ENCODE measurements at regions of chr1 and their contacts with region 1.

Region 1: GRCh38 chr1:228515200-228515834 is 28.1 kb downstream of the RNF187 start:
- DNase-seq: peak; percentile 45
- ATAC-seq: no peak
- H3K4me3 Mint-ChIP-seq: no peak overlapping the region
- H3K27ac Mint-ChIP-seq: no peak overlapping the region
- H3K4me1 Mint-ChIP-seq: peaks cover 8% of the 10 kb centered on the region
- H3K27me3 Mint-ChIP-seq: peaks cover 18% of the 10 kb centered on the region

Region 2: DNA sequence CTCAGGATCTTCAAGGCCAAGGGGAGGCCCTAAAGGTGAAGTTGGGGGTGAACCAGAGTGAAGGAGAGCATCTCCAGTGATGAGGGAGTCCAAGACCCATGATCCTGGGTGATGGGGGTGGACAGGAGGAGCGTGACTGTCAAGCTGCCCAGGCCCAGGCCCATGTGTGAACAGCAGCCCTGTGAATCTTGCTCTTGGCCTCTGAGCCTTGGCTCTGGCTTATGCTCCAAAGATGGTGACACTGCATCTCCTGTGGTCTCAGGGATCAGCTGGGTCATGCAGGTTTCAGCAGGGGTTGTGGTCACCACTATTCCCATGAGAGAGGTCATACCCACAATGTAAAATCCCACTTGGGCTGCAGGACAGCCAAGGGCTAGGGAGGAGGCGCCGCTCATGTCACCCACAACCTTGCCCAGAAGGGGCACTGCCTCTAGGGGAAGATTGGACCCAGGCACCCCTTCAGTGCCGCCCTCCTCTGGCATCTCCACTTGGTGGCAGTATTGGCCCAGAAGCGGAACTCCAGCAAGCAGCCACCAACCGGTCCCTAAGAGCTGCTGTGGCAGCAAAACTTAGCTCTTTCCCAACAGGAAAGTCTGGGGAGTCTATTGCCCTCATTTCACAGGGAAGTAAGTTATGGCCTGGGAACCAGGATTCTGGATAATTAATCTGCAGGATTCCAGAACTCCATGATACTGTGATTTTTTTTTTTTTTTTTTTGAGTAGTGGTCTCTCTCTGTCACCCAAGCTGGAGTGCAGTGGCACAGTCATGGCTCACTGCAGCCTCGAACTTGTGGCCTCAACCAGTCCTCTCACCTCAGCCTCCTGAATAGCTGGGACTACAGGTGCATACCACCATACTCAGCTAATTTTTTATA is 516.0 kb before region 1 on chr1:
- CTCF ChIA-PET with region 1: interaction called, 3 read pairs
- POLR2A ChIA-PET with region 1: no interaction called
- intact Hi-C with region 1: loop called in 1 of 2 experiments (anchors 1 kb)
- DNase-seq: peak; percentile 87
- ATAC-seq: peak; percentile 98
- H3K4me3 Mint-ChIP-seq: no peak overlapping the region
- H3K27ac Mint-ChIP-seq: no peak overlapping the region
- H3K4me1 Mint-ChIP-seq: no peaks in the 10 kb centered on the region
- H3K27me3 Mint-ChIP-seq: peaks cover 18% of the 10 kb centered on the region

Region 3: DNA sequence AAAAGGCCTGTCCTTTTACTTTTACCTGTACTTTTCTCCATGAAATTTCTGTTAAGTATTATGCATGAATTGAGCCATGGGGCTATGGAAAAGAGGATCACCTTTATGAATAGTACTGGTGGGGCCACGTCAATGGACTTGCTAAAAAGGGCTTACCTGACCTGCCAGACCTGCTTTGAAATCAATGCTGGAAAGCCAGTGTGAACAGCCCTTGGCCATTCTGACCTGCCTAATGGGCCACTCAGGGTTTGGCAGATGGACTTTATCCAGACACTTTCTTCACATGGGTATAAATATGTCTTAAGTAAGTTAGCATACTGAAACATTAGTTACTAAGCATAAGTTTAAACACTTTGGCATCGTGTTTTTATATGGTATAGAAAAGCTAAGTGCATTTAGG is 383.6 kb before region 1 on chr1:
- CTCF ChIA-PET with region 1: interaction called, 3 read pairs
- POLR2A ChIA-PET with region 1: no interaction called
- intact Hi-C with region 1: loop called (anchors 1 kb)
- DNase-seq: no peak
- ATAC-seq: no peak
- H3K4me3 Mint-ChIP-seq: no peak overlapping the region
- H3K27ac Mint-ChIP-seq: no peak overlapping the region
- H3K4me1 Mint-ChIP-seq: peaks cover 3% of the 10 kb centered on the region
- H3K27me3 Mint-ChIP-seq: peaks cover 5% of the 10 kb centered on the region

Region 4: DNA sequence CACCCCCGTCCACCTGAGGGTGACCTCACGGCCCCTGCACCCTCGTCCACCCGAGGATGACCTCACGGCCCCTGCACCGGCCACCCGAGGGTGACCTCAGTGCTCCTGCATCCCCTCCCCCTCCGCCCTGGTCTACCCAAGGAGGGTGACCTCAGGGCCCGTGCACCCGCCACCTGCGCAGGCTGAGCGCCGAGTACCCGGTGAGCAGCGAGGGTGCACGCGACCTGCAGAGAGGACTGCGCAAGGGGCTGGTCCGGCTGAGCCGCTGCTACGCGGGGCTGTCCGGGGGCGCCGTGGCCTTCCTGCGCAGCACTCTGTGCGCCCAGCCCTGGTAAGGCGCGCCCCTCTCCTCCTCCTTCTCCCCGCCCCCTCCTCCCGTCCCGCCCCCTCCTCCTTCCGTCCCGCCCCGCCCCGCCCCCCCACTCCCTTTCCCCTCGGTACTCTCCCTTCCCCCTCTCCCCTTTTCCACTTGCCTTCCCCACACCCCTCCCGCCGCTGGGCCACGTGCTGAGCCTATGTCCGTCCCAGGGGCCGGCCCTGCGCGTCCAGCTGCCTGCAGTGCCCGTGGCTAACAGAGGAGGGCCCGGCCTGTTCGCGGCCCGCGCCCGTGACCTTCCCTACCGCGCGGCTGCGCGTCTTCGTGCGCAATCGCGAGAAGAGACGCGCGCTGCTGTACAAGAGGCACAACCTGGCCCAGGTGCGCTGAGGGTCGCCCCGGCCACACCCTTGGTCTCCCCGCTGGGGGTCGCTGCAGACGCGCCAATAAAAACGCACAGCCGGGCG is 137.0 kb before region 1 on chr1:
- CTCF ChIA-PET with region 1: no interaction called
- POLR2A ChIA-PET with region 1: no interaction called
- intact Hi-C with region 1: loop called in 1 of 2 experiments (anchors 1 kb)
- DNase-seq: peak; percentile 84
- ATAC-seq: peak; percentile 77
- H3K4me3 Mint-ChIP-seq: peak overlapping the region; percentile 73
- H3K27ac Mint-ChIP-seq: no peak overlapping the region
- H3K4me1 Mint-ChIP-seq: peaks cover 8% of the 10 kb centered on the region
- H3K27me3 Mint-ChIP-seq: peaks cover 10% of the 10 kb centered on the region

Region 5: DNA sequence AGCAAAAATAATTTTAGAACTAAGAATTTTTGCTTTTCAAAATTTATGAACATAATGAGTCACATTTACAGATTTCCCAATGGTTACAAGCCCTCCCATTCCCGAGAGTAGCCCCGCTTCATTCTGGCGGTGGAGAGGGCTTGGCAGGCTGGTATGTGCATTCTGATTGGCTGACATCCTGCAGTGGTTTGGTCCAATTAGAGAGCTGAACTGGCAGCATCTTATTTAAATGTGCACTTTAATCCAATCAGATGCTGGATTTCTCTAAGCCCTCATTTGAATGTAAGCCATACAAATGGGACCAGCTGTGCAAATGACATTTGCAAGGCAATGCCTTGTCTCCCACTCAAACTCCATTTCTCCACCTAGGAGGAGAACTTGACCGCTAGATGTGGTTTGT is 80.6 kb before region 1 on chr1:
- CTCF ChIA-PET with region 1: no interaction called
- POLR2A ChIA-PET with region 1: no interaction called
- intact Hi-C with region 1: no loop called
- DNase-seq: no peak
- ATAC-seq: no peak
- H3K4me3 Mint-ChIP-seq: no peak overlapping the region
- H3K27ac Mint-ChIP-seq: no peak overlapping the region
- H3K4me1 Mint-ChIP-seq: no peaks in the 10 kb centered on the region
- H3K27me3 Mint-ChIP-seq: peaks cover 11% of the 10 kb centered on the region

Region 6: GRCh38 chr1:228471762-228472398 is 43.4 kb before region 1 on chr1:
- CTCF ChIA-PET with region 1: interaction called, 3 read pairs
- POLR2A ChIA-PET with region 1: no interaction called
- intact Hi-C with region 1: loop called in 1 of 2 experiments (anchors 2 kb)
- DNase-seq: peak; percentile 28
- ATAC-seq: peak; percentile 86
- H3K4me3 Mint-ChIP-seq: no peak overlapping the region
- H3K27ac Mint-ChIP-seq: no peak overlapping the region
- H3K4me1 Mint-ChIP-seq: peaks cover 8% of the 10 kb centered on the region
- H3K27me3 Mint-ChIP-seq: peaks cover 7% of the 10 kb centered on the region

Region 7: DNA sequence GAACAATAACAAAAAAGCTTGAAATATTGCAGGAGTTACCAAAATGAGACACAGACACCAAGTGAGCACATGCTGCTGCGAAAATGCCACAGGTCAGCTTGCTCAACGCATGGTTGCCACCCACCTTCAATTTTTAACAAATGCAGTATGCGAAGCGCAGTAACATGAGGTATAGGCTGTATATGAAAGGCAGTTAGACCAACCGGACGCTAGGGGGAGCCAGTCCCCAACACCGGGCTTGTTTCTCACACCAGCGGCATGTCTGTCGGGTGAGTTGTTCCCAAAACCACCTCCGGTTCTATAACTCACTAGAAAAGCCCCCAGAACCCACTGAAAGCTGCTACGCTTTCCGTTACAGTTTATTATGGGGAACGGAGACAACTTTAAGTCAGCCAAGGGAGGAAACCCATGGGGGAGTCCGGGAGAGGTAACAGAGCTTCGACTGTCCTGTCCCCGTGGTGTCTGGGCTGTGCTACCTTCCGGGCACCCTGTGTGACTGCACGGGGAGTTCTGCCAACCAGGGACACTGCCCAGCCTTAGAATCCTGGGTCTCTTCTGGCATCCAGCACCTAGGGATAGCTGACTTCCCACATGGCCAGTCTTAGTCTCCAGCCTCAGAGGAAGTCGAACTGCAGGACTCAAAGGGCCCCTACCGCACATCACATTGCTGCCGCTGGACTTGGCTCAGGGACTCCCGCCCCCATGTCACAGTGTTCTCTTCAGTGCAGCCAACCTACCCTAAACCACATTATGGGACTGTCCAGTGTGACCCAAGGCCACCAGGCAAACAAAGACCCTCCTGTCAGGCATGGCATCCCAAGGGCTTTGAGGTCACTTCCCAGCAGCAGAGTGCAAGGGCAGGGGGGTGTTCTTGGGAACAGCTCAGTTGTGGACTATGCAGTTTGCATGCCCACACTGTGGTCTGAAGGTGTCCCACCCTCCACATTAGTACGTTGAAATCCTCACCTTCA is 14.1 kb before region 1 on chr1:
- CTCF ChIA-PET with region 1: interaction called, 18 read pairs
- POLR2A ChIA-PET with region 1: no interaction called
- intact Hi-C with region 1: loop called (anchors 1 to 2 kb)
- DNase-seq: peak; percentile 95
- ATAC-seq: peak; percentile 96
- H3K4me3 Mint-ChIP-seq: peak overlapping the region; percentile 58
- H3K27ac Mint-ChIP-seq: peak overlapping the region; percentile 62
- H3K4me1 Mint-ChIP-seq: peaks cover 25% of the 10 kb centered on the region
- H3K27me3 Mint-ChIP-seq: no peaks in the 10 kb centered on the region

Region 8: DNA sequence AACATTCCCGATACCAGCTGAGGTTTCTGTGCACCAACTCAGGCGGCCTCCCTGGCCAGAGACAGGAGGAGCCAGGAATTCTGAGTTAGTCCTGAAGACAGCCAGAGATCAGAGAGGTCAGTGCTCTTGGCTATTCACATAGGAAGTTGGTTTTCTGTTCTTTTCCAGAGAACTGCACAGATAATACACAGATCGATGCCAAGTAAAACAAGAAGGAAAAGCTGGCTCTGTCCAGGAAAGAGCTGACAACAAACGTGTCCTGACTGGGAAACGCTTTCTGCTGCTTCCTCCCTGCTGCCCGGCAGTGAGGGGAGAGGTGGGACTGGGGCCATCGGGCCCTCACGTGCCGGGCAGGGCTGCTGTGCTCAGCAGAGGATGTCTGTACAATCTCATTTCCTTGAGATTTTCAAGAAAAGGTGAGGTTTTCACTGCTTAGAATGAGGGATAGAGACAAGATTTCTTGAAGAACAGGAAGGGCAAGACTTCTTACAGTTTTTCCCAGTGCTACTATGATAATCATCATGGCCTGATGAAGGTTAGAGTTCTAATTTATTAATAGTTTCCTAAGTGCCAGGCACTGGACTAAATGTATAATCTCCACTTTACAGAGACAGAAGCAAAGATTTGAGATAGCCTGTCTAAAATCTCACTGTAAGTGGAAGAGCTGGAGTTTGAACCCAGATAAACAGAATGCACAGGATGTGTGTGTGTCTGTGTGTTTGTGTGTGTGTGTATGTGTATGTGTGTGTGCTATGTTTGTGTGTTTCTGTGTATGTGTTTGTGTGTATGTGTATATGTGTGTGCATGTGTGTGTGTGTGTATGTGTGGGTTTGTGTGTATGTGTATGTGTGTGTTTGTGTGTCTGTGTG is 544.6 kb after region 1 on chr1:
- CTCF ChIA-PET with region 1: no interaction called
- POLR2A ChIA-PET with region 1: no interaction called
- intact Hi-C with region 1: no loop called
- DNase-seq: no peak
- ATAC-seq: no peak
- H3K4me3 Mint-ChIP-seq: no peak overlapping the region
- H3K27ac Mint-ChIP-seq: no peak overlapping the region
- H3K4me1 Mint-ChIP-seq: peaks cover 45% of the 10 kb centered on the region
- H3K27me3 Mint-ChIP-seq: no peaks in the 10 kb centered on the region

Measured in activated CD4-positive, alpha-beta T cell treated with anti-CD3 and anti-CD28 coated beads for 36 hours (primary cell).